ENCODE measurements at regions of chr10 and their contacts with region 1.

Region 1: DNA sequence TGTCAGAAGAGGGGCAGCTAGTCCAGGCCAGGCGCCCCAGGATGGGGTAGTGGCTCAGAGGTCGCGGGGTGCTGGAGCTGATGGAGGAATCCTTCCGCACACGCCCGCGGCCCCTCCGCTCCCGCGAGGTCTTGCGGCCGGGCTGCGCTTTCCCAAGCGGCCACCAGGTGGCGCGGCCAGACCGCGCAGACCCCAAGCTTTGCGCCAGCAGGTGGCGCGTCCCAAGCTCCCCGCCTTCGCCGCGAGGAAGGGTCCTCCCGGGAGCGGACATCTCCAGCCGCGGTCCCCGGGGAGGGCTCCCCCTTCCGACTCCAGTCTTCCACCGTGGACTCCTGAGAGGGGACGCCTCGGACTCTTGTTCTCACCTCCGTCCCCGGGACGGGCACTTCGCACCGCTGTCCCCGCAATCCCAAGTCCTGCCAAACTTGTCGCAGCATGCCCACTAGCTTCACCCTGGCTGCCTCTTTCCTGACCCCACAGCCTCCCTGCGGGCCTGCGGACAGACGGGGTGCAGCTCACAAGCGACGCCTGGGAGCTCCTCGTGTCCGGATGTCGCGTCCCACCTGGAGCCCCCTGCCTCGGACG is 19.4 kb downstream of the KCNK18 start:
- DNase-seq: no peak
- H3K4me3 ChIP-seq: peak overlapping the region; percentile 55
- H3K27me3 ChIP-seq: peaks cover 6% of the 10 kb centered on the region
- CTCF ChIP-seq: peak; percentile 100

Region 2: DNA sequence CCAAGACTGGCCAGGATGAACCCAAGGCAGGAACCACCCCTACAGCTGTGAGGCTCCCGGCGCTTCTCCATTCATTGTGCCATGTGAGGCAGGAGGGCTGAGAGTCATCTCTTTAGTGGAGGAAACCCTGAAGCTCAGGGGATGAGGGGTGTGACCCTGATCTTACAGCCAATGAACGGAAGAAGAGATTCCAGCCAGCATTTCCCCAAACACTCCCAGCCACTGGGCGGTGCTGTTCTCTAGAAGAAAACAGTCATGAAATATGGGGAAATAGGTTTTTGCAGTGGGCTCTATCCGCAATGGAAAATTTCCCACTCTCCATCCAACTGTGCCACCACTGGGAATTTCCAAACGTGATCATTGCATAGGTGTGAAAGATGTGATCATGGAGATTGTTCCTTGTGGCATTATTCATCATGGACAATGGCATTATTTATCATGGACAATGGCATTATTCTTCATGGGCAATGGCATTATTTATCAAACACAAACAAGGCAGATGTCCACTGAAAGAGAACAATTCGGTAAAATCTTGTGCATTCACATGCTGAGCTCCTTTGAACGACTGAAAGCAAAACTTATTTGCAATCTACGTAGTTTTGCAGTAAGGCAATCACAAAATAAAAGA is 10.2 kb after region 1 on chr10:
- CTCF ChIA-PET with region 1: interaction called, 36 read pairs
- POLR2A ChIA-PET with region 1: interaction called, 7 read pairs
- DNase-seq: no peak
- H3K4me3 ChIP-seq: no peak overlapping the region
- H3K27me3 ChIP-seq: no peaks in the 10 kb centered on the region; the same call in none of the 2 replicates
- CTCF ChIP-seq: peak; percentile 57

Region 3: DNA sequence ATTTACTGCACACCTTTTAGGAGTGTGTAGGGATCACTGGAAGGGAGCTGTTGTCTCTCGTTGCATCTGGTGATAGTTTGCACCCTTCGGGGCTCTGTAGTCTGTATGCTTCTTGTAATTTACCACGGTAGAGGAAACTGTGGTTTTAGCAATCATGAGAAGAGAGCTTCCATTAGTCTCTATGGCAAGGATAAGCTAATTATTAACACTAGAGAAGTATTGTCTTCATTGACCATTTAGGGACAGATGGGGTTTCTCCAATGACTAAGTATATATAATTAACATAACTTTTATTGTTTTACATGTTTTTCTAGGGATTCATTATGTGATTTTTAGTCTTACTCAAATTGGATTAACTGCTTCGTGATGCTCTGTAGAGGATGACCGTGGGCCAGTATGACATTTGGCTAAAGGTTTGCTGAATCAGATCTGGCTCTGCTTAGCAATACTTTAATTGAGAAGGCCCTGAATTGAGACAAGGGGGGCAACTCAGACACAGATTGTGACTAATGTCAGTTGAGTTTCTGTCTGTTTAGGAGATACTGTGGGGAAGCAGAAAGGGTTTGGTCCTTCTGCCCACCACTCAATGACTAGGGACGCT is 32.9 kb after region 1 on chr10:
- CTCF ChIA-PET with region 1: interaction called, 27 read pairs
- POLR2A ChIA-PET with region 1: no interaction called
- DNase-seq: no peak
- H3K4me3 ChIP-seq: no peak overlapping the region
- H3K27me3 ChIP-seq: peaks cover 3% of the 10 kb centered on the region
- CTCF ChIP-seq: no peak

Region 4: GRCh38 chr10:117425974-117426566 is 209.4 kb after region 1 on chr10:
- CTCF ChIA-PET with region 1: interaction called, 13 read pairs
- POLR2A ChIA-PET with region 1: no interaction called
- DNase-seq: no peak
- H3K4me3 ChIP-seq: no peak overlapping the region
- H3K27me3 ChIP-seq: peaks cover 3% of the 10 kb centered on the region; the same call in 1 of the 2 replicates
- CTCF ChIP-seq: no peak

Region 5: GRCh38 chr10:117442944-117443685 is 226.4 kb after region 1 on chr10:
- CTCF ChIA-PET with region 1: interaction called, 14 read pairs
- POLR2A ChIA-PET with region 1: no interaction called
- DNase-seq: no peak
- H3K4me3 ChIP-seq: no peak overlapping the region
- H3K27me3 ChIP-seq: peaks cover 2% of the 10 kb centered on the region
- CTCF ChIP-seq: peak; percentile 89

Measured in BJ (cell line).